Posterior vena cava (tissue), 2 donors: ENCODE measurements at regions of chr3 and their contacts with region 1.

Region 1: GRCh38 chr3:9422712-9423424 is 25.5 kb downstream of the SETD5 start:
- DNase-seq: no peak

Region 2: DNA sequence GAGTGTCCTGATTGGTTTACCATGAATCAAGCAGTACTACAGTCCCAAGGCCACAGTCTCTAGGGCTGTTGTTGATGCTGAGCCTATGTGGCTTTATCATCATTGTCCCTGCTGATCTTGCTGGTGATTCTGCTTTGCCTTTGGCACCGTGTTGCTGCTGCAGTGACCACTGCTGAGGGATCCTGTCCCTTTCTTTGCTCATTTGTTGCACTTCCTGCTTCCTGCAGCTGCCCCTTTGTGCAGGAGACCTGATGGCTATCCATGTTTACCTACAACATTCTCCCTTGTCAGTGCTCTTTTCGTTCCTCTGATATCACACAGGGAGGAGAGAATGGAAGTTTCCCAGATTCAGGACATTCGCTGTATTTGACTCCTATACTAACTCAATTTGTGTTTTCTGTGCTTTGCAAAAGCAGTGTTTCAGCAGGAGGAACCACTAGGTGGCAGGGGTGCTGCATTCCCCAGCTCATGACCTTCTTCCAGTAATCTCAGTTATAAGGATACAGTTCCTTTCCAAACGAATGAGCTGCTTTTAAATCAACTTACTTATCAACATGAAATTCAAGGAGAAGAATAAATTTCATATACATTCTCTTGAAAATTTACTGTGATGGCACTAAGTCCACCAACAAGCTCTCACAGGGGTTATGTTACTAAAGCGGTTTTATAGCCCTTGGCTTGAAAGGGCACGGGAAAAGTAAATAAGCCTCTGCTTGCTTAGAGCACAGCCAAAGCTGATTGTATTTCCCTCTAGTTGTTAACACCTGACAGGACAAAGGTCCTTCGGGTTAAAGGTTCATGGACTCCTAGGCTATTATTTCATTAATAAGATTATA is 69.7 kb before region 1 on chr3:
- intact Hi-C with region 1: loop called in 1 of 2 experiments (anchors 10 kb)
- DNase-seq: peak; percentile 81